B cell (primary cell): ENCODE measurements at regions of chr3 and their contacts with region 1.

Region 1: GRCh38 chr3:71444028-71444860 is 139.3 kb downstream of the FOXP1 start:
- DNase-seq: peak; percentile 92
- ATAC-seq: peak; percentile 76
- H3K4me3 ChIP-seq: peak overlapping the region in 3 of 5 experiments; percentile 3 to 22 (median 6)
- H3K4me3 Mint-ChIP-seq: peak overlapping the region; percentile 70
- H3K27ac ChIP-seq: peak overlapping the region; percentile 90 to 92
- H3K27ac Mint-ChIP-seq: peak overlapping the region; percentile 96
- H3K4me1 ChIP-seq: peaks cover 83 to 85% of the 10 kb centered on the region in 2 donors
- H3K4me1 Mint-ChIP-seq: peaks cover 82% of the 10 kb centered on the region
- H3K27me3 ChIP-seq: no peaks in the 10 kb centered on the region
- H3K27me3 Mint-ChIP-seq: no peaks in the 10 kb centered on the region
- CTCF ChIP-seq: no peak

Region 2: DNA sequence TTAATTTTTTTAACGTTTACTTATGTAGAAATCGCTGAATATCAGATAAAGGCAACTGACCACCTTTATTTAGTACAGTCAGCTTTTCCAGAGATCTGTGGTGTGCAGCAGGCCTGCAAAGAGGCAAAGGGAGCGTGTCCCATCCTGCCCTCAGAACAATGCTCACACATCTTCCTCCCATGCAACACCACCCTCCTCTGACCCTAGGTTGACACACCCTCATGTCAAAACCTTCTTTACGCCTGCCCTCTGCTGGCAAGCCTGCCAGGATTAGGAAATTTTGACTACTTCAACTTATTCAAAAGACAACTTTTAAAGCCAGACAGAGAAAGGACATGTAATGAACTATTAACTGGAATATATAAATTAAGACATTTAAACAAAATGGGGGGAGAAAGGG is 374.4 kb before region 1 on chr3:
- CTCF ChIA-PET with region 1: no interaction called
- POLR2A ChIA-PET with region 1: no interaction called
- intact Hi-C with region 1: loop called (anchors 1 kb)
- DNase-seq: peak; percentile 83
- ATAC-seq: peak; percentile 48
- H3K4me3 ChIP-seq: no peak overlapping the region
- H3K4me3 Mint-ChIP-seq: peak overlapping the region; percentile 69
- H3K27ac ChIP-seq: peak overlapping the region; percentile 25 to 77
- H3K27ac Mint-ChIP-seq: peak overlapping the region; percentile 84
- H3K4me1 ChIP-seq: peaks cover 55 to 67% of the 10 kb centered on the region in 2 donors
- H3K4me1 Mint-ChIP-seq: peaks cover 79% of the 10 kb centered on the region
- H3K27me3 ChIP-seq: no peaks in the 10 kb centered on the region
- H3K27me3 Mint-ChIP-seq: no peaks in the 10 kb centered on the region
- CTCF ChIP-seq: peak; percentile 78

Region 3: DNA sequence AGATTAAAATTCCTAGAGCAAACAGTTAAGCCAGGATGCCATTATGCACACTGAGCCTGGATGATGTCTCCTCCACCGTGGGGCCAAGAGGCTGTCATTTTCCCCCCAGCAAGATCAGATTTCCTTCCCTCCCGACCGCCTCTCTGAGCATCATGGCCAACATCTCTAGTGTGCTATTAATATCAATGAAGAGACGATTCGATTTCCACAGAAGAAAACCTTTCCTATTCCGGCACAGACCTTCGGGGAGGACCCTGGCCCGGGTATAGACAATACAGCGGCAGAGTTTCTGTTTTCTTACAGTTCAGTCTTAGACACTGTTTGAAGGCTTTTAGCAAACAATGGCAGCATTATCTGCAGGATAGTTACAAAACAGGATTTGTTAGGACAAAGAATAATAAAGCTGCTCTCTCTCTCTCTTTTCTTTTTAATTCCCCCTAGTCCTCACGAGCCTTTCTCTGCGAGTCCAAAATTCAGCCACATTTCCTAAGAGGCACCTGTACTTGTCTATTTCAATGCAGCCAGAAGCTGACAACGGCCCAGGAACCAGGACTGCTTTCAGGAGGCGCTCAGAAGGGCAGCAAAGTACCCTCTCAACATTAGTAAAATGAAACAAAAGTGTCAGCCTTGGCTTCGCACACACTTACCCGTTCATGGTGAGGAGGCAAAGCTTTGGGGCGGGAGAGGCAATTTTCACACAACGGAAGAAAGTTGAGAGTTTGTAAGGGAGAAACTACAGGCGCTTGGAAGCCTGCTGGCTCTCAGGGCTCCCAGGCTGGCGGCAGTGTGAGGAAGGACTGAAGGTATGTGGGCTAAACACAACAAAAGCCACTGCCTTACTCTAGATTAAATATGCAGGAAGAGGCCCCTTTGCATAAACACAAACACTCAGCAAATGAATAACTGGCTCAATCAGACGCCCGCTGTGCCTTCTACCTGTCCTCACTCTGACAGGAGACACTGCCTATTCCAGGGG is 138.7 kb before region 1 on chr3:
- CTCF ChIA-PET with region 1: no interaction called
- POLR2A ChIA-PET with region 1: no interaction called
- intact Hi-C with region 1: loop called (anchors 5 kb)
- DNase-seq: peak; percentile 49
- ATAC-seq: peak; percentile 60
- H3K4me3 ChIP-seq: peak overlapping the region; percentile 50 to 85 (median 67)
- H3K4me3 Mint-ChIP-seq: peak overlapping the region; percentile 88
- H3K27ac ChIP-seq: peak overlapping the region; percentile 70 to 84
- H3K27ac Mint-ChIP-seq: peak overlapping the region; percentile 94
- H3K4me1 ChIP-seq: peaks cover 47 to 57% of the 10 kb centered on the region in 2 donors
- H3K4me1 Mint-ChIP-seq: peaks cover 77% of the 10 kb centered on the region
- H3K27me3 ChIP-seq: no peaks in the 10 kb centered on the region
- H3K27me3 Mint-ChIP-seq: no peaks in the 10 kb centered on the region
- CTCF ChIP-seq: no peak

Region 4: DNA sequence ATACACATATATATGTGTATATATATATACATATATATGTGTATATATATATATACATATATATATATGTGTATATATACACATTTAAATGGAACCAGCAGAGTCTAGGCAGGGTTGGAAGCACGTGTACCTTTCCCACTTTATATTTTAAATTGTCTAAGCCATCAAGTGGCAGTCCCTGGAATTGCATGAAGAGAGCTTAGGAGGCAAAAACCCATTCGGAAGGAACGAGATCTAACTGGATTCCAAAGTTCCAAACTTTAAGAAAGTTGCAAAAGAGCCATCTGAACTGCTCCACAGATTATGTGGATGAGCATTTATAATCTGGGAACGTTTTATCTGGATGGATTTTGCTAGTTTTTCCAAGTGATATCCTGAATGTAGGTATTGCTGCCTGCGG is 47.2 kb before region 1 on chr3:
- CTCF ChIA-PET with region 1: interaction called, 26 read pairs
- POLR2A ChIA-PET with region 1: interaction called, 5 read pairs
- intact Hi-C with region 1: loop called (anchors 2 kb)
- DNase-seq: peak; percentile 47
- ATAC-seq: no peak
- H3K4me3 ChIP-seq: no peak overlapping the region
- H3K4me3 Mint-ChIP-seq: peak overlapping the region; percentile 62
- H3K27ac ChIP-seq: peak overlapping the region; percentile 58 to 82
- H3K27ac Mint-ChIP-seq: no peak overlapping the region
- H3K4me1 ChIP-seq: peaks cover 69 to 88% of the 10 kb centered on the region in 2 donors
- H3K4me1 Mint-ChIP-seq: peaks cover 77% of the 10 kb centered on the region
- H3K27me3 ChIP-seq: no peaks in the 10 kb centered on the region
- H3K27me3 Mint-ChIP-seq: no peaks in the 10 kb centered on the region
- CTCF ChIP-seq: peak; percentile 44

Region 5: GRCh38 chr3:71428841-71429596 is 15.2 kb before region 1 on chr3:
- CTCF ChIA-PET with region 1: interaction called, 8 read pairs
- POLR2A ChIA-PET with region 1: interaction called, 18 read pairs
- intact Hi-C with region 1: no loop called
- DNase-seq: no peak
- ATAC-seq: peak; percentile 37
- H3K4me3 ChIP-seq: peak overlapping the region in 2 of 5 experiments; percentile 2 to 35
- H3K4me3 Mint-ChIP-seq: peak overlapping the region; percentile 50
- H3K27ac ChIP-seq: peak overlapping the region; percentile 66 to 80
- H3K27ac Mint-ChIP-seq: peak overlapping the region; percentile 78
- H3K4me1 ChIP-seq: peaks cover 76 to 85% of the 10 kb centered on the region in 2 donors
- H3K4me1 Mint-ChIP-seq: peaks cover 86% of the 10 kb centered on the region
- H3K27me3 ChIP-seq: no peaks in the 10 kb centered on the region
- H3K27me3 Mint-ChIP-seq: no peaks in the 10 kb centered on the region
- CTCF ChIP-seq: no peak

Region 6: DNA sequence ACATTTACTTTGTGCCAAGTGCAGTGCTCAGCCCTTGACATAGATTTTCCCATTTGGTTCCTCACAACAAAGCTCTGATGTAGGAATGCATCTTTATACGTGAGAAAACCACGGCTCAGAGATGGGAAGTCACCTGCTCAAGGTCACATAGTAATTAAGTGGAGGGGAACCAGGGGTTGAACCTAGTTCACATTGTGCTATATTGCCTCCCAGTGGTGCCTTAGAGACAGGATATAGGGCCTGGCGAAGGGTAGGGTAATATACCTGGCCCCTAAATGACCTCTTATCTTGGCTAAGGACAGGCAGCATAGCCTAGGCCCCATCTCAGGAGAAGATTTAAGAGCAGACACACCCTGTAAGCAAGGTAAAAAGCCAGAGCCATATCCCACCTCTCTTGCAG is 67.8 kb after region 1 on chr3:
- CTCF ChIA-PET with region 1: interaction called, 3 read pairs
- POLR2A ChIA-PET with region 1: no interaction called
- intact Hi-C with region 1: loop called (anchors 2 kb)
- DNase-seq: peak; percentile 76
- ATAC-seq: peak; percentile 95
- H3K4me3 ChIP-seq: peak overlapping the region in 1 of 5 experiments; percentile 10
- H3K4me3 Mint-ChIP-seq: peak overlapping the region; percentile 66
- H3K27ac ChIP-seq: peak overlapping the region; percentile 17 to 74
- H3K27ac Mint-ChIP-seq: no peak overlapping the region
- H3K4me1 ChIP-seq: peaks cover 21 to 28% of the 10 kb centered on the region in 2 donors
- H3K4me1 Mint-ChIP-seq: peaks cover 29% of the 10 kb centered on the region
- H3K27me3 ChIP-seq: no peaks in the 10 kb centered on the region
- H3K27me3 Mint-ChIP-seq: no peaks in the 10 kb centered on the region
- CTCF ChIP-seq: peak; percentile 65